ENCODE measurements at regions of chr10 and their contacts with region 1.

Region 1: DNA sequence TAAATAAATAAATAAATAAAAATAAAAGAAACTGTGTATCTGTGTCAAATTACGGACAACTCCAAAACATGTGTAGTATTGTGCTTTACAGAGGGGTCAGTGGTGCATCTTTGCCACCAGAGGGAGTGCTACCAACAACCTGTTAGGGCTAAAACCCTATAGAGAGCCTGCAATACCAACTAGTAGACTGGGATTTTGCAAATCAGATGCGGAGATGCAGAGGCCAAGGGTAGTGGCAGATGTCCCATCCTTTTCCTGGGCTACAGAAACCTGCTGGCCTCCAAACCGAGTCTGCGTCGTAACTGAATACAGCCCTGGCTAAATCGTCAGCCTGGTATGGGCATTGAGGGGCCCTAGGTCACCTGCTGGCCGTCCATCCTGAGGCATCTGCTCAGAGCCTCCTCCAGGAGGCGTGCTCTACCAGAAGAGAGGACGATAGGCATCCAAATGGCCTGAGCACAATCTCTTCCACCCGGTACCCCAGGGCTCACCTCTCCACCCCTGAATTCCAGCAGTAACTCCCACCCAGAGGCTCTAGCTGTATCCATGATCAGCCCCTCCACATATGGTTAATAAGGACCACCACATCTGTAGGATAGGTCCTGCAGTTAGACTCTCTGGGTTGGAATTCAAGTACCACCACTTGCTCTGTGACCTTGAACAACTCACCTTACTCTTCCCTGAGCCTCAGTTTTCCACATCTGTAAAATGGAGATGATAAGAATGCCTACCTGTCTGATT is 6.2 kb upstream of the RRP12 start:
- DNase-seq: peak; percentile 83
- ATAC-seq: peak; percentile 96
- H3K4me3 ChIP-seq: peak overlapping the region in 2 of 5 experiments; percentile 38
- H3K4me3 Mint-ChIP-seq: peak overlapping the region; percentile 66
- H3K27ac ChIP-seq: no peak overlapping the region
- H3K27ac Mint-ChIP-seq: peak overlapping the region; percentile 69
- H3K4me1 ChIP-seq: peaks cover 0 to 12% of the 10 kb centered on the region in 2 donors
- H3K4me1 Mint-ChIP-seq: peaks cover 12% of the 10 kb centered on the region
- H3K27me3 ChIP-seq: no peaks in the 10 kb centered on the region
- H3K27me3 Mint-ChIP-seq: no peaks in the 10 kb centered on the region
- CTCF ChIP-seq: peak; percentile 85

Region 2: DNA sequence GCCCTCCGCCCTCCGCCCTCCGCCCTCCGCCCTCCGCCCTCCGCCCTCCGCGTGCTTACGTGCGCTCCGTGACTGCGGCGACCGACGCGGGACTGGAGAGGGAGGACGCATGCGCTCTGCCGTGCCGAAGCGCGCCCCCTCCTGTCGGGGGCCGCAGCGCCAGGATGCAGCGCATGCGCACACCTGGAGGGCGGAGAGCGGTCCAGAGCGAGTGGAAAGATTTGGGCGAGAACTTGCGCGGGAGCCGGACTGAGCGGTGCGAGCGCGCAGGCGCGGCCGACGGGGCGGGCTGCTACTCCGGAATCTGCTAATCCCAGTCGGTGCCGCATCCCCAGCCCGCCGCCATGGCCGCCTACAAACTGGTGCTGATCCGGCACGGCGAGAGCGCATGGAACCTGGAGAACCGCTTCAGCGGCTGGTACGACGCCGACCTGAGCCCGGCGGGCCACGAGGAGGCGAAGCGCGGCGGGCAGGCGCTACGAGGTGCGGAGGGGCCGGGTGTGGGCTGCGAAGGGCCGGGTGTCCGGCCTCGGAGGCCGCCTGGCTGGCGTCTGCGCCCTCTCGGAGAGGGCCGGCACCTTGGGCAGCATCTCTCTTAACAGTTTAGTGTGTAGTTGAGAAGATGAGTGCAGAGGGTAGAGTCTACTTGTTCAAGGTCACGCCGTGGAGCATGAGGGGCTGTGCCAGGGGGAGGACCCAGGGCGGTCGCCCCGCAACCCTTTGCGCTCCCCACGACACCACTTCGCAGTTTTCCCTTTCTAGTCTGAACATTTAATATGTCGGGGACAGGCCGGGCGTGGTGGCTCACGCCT is 18.8 kb after region 1 on chr10 and contains the start of gene PGAM1:
- CTCF ChIA-PET with region 1: interaction called, 26 read pairs
- POLR2A ChIA-PET with region 1: no interaction called
- intact Hi-C with region 1: loop called (anchors 1 kb)
- DNase-seq: peak; percentile 98
- ATAC-seq: peak; percentile 87
- H3K4me3 ChIP-seq: peak within 1 kb of the TSS; percentile 72 to 87 (median 80)
- H3K4me3 Mint-ChIP-seq: peak within 1 kb of the TSS; percentile 97
- H3K27ac ChIP-seq: peak within 1 kb of the TSS; percentile 72 to 81
- H3K27ac Mint-ChIP-seq: peak within 1 kb of the TSS; percentile 99
- H3K4me1 ChIP-seq: peaks cover 21 to 31% of the 10 kb centered on the region in 2 donors
- H3K4me1 Mint-ChIP-seq: peaks cover 43% of the 10 kb centered on the region
- H3K27me3 ChIP-seq: no peaks in the 10 kb centered on the region
- H3K27me3 Mint-ChIP-seq: no peaks in the 10 kb centered on the region
- CTCF ChIP-seq: peak; percentile 65
- total RNA-seq, gene PGAM1: 80.3 and 83.4 TPM in 2 replicates

Region 3: GRCh38 chr10:97463363-97464132 is 56.2 kb after region 1 on chr10:
- CTCF ChIA-PET with region 1: no interaction called
- POLR2A ChIA-PET with region 1: no interaction called
- intact Hi-C with region 1: loop called (anchors 1 kb)
- DNase-seq: peak; percentile 54
- ATAC-seq: peak; percentile 71
- H3K4me3 ChIP-seq: no peak overlapping the region
- H3K4me3 Mint-ChIP-seq: no peak overlapping the region
- H3K27ac ChIP-seq: no peak overlapping the region
- H3K27ac Mint-ChIP-seq: peak overlapping the region; percentile 17
- H3K4me1 ChIP-seq: no peaks in the 10 kb centered on the region
- H3K4me1 Mint-ChIP-seq: no peaks in the 10 kb centered on the region
- H3K27me3 ChIP-seq: no peaks in the 10 kb centered on the region
- H3K27me3 Mint-ChIP-seq: no peaks in the 10 kb centered on the region
- CTCF ChIP-seq: peak; percentile 86

Region 4: GRCh38 chr10:97532935-97533671 is 125.7 kb after region 1 on chr10:
- CTCF ChIA-PET with region 1: no interaction called
- POLR2A ChIA-PET with region 1: no interaction called
- intact Hi-C with region 1: no loop called
- DNase-seq: no peak
- ATAC-seq: no peak
- H3K4me3 ChIP-seq: no peak overlapping the region
- H3K4me3 Mint-ChIP-seq: no peak overlapping the region
- H3K27ac ChIP-seq: no peak overlapping the region
- H3K27ac Mint-ChIP-seq: no peak overlapping the region
- H3K4me1 ChIP-seq: no peaks in the 10 kb centered on the region
- H3K4me1 Mint-ChIP-seq: no peaks in the 10 kb centered on the region
- H3K27me3 ChIP-seq: no peaks in the 10 kb centered on the region
- H3K27me3 Mint-ChIP-seq: no peaks in the 10 kb centered on the region
- CTCF ChIP-seq: no peak

Region 5: GRCh38 chr10:97553575-97554031 is 146.2 kb after region 1 on chr10:
- CTCF ChIA-PET with region 1: interaction called, 29 read pairs
- POLR2A ChIA-PET with region 1: interaction called, 4 read pairs
- intact Hi-C with region 1: no loop called
- DNase-seq: peak; percentile 59
- ATAC-seq: peak; percentile 81
- H3K4me3 ChIP-seq: no peak overlapping the region
- H3K4me3 Mint-ChIP-seq: no peak overlapping the region
- H3K27ac ChIP-seq: no peak overlapping the region
- H3K27ac Mint-ChIP-seq: no peak overlapping the region
- H3K4me1 ChIP-seq: no peaks in the 10 kb centered on the region
- H3K4me1 Mint-ChIP-seq: no peaks in the 10 kb centered on the region
- H3K27me3 ChIP-seq: no peaks in the 10 kb centered on the region
- H3K27me3 Mint-ChIP-seq: no peaks in the 10 kb centered on the region
- CTCF ChIP-seq: peak; percentile 73

Region 6: GRCh38 chr10:97731346-97732051 is 324.1 kb after region 1 on chr10:
- CTCF ChIA-PET with region 1: no interaction called
- POLR2A ChIA-PET with region 1: no interaction called
- intact Hi-C with region 1: loop called (anchors 2 kb)
- DNase-seq: peak; percentile 76
- ATAC-seq: peak; percentile 70
- H3K4me3 ChIP-seq: no peak overlapping the region
- H3K4me3 Mint-ChIP-seq: no peak overlapping the region
- H3K27ac ChIP-seq: no peak overlapping the region
- H3K27ac Mint-ChIP-seq: peak overlapping the region; percentile 55
- H3K4me1 ChIP-seq: peaks cover 5 to 6% of the 10 kb centered on the region in 2 donors
- H3K4me1 Mint-ChIP-seq: peaks cover 10% of the 10 kb centered on the region
- H3K27me3 ChIP-seq: peaks cover 0 to 3% (median 0%) of the 10 kb centered on the region in 4 experiments
- H3K27me3 Mint-ChIP-seq: peaks cover 4% of the 10 kb centered on the region
- CTCF ChIP-seq: peak; percentile 82

Measured in B cell (primary cell).